ENCODE measurements at regions of chr7 and their contacts with region 1.

Region 1: DNA sequence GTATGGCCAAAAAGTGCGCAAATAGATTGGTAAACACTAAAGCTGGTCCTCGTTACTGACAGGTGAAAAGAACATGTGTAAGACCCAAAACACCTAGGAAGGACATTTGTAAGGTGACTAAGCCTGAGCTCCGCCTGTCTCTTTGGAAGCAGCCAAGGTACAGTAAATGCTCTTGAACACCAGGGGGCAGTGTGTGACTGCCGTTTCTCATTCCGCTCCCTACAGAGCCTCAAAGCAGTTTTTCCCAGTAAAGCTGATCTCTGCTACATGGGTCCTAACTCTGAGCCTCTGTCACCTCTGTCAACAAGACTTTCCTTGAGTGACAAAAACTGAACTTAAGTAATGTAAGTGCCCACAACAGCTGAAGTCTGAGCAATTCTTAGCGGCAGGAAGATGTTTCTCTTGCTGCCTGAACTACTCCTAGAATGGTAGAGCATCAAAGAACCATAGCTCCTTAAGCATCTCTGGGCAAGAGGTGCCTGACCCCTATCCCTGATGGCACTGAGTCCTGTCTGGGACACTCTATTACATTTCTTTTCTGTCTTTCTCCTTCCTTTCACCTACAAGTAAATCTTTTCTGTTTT is 238.0 kb upstream of the INHBA start:
- DNase-seq: peak; percentile 53
- ATAC-seq: peak; percentile 84

Region 2: GRCh38 chr7:42107484-42108245 is 166.8 kb after region 1 on chr7:
- intact Hi-C with region 1: no loop called
- DNase-seq: no peak
- ATAC-seq: peak; percentile 74

Region 3: DNA sequence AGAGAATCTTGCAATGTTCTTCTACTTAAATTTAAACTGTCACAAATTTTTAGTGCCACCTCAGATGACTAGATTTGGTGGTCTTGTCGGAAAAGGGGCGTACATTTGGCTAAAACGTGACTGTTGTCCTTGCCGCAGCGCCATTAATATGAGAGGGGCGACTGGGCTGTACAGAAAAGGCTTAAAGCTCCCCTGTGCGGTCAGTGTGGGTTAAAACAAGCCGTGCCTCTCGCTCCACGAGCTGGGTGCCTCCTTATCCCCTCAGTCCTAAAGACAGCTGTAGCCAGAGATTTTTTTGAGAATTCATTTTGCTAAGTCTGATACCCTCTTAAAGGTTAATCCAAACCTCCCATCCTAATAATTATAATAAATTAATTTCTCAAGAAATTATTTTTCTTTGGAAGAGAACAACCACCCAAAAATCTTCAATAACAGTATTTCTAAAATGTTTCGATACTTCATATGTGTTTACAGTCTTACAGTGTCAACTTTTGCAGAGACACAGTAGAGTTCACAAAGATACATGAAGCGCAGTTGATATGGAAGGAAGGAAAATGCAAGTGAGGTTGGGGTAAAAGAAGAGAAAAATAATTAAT is 902.5 kb after region 1 on chr7:
- intact Hi-C with region 1: loop called (anchors 5 kb)
- DNase-seq: peak; percentile 44
- ATAC-seq: peak; percentile 89